K562 (cell line): ENCODE measurements at regions of chr4 and their contacts with region 1.

Region 1: DNA sequence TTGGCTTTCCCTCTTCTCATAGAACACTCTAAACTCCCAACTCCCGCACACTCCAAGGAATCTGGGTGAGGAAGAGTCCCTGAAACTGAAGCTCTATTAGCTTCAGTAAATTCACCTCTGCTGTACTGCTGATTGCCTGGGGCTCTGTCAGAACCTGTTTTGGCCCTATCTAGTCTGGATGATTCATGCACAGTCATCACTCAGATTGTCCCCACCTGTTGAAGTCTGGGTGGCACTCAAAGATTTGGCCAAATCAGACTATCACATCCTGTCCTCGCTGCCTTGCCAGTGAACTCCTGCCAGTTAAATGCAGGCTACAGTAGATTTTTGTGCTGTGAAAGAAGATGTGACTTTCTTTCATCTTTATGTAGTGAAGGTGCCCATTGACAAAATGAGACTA is 63.5 kb upstream of the EMCN start:
- DNase-seq: no peak
- ATAC-seq: no peak
- H3K4me3 ChIP-seq: no peak overlapping the region
- H3K27ac ChIP-seq: no peak overlapping the region
- H3K4me1 ChIP-seq: no peaks in the 10 kb centered on the region
- H3K27me3 ChIP-seq: no peaks in the 10 kb centered on the region
- CTCF ChIP-seq: no peak
- EP300 ChIP-seq: no peak
- POLR2A ChIP-seq: no peak
- RAD21 ChIP-seq: no peak

Region 2: DNA sequence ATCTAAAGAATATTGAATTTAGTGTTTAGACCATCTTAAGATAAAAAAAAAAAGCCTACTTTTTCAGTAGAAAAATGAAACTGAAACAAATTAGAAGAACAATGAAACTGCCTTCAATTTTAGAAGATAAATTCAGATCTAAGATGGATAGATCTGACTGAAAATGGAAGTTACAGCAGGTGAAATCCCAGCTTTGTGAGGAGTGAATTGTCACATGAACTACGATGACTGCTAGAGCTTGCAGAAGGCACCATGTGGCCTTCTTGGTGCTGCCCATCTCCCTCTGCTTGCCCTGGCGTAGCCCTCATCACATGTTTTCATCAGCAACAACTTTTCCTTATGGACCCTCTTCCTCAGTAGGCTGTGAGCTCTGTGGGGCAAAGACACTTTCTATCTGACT is 12.1 kb before region 1 on chr4:
- CTCF ChIA-PET with region 1: no interaction called
- POLR2A ChIA-PET with region 1: no interaction called
- in situ Hi-C with region 1: no loop called
- intact Hi-C with region 1: loop called (anchors 1 kb)
- DNase-seq: no peak
- ATAC-seq: no peak
- H3K4me3 ChIP-seq: no peak overlapping the region
- H3K27ac ChIP-seq: no peak overlapping the region
- H3K4me1 ChIP-seq: no peaks in the 10 kb centered on the region
- H3K27me3 ChIP-seq: no peaks in the 10 kb centered on the region
- CTCF ChIP-seq: no peak
- EP300 ChIP-seq: no peak
- POLR2A ChIP-seq: no peak
- RAD21 ChIP-seq: no peak

Region 3: DNA sequence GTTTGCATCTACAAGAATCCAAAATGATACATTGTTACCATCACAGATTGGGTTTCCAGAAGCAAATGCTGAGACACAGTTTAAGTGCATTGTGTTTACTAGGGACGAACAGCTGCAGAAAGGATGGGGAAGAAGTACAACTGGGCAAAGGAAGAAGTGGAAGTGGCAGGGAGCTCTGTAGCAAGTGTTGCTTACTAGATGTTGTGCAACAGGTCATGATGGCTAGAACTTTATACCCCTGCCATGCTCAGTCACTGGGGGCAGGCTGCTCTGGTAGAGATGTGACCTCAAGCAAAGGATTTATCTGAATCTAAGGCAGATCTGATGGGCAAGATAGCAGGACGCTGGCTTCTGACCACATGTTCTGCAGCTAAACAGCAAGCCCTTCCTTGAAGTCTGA is 12.6 kb after region 1 on chr4:
- CTCF ChIA-PET with region 1: no interaction called
- POLR2A ChIA-PET with region 1: no interaction called
- in situ Hi-C with region 1: no loop called
- intact Hi-C with region 1: no loop called
- DNase-seq: no peak
- ATAC-seq: no peak
- H3K4me3 ChIP-seq: no peak overlapping the region
- H3K27ac ChIP-seq: no peak overlapping the region
- H3K4me1 ChIP-seq: no peaks in the 10 kb centered on the region
- H3K27me3 ChIP-seq: no peaks in the 10 kb centered on the region
- CTCF ChIP-seq: no peak
- EP300 ChIP-seq: no peak
- POLR2A ChIP-seq: no peak
- RAD21 ChIP-seq: no peak

Region 4: DNA sequence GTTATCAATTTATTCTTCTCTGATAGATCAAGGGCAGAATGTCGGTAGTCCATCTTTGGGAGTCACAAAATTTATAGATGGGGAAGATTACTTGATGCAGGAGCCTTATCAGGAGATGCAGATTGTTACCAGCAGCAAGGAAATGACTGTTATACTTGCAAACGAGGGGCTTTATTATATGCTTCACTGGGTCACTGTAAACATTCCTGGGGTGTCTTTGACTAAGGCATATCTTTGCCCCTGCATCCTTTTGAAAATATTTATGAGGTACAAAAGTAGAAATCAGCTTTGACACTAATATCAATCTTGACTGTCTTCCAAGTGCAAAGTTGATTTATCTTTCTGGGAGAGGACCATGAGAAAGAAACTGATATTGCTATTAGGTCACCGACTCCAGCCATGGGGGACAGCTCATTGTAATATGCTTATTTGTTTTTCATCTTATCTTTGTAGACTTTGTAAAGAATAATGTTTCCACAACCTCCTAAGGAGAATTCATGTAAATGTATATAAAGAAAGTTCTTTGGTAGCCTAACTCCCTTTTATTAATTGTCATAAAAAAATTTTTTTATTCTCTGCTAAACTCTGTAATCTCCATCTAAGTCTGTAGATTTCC is 113.8 kb after region 1 on chr4:
- CTCF ChIA-PET with region 1: no interaction called
- POLR2A ChIA-PET with region 1: no interaction called
- in situ Hi-C with region 1: no loop called
- intact Hi-C with region 1: no loop called
- DNase-seq: no peak
- ATAC-seq: no peak
- H3K4me3 ChIP-seq: no peak overlapping the region
- H3K27ac ChIP-seq: no peak overlapping the region
- H3K4me1 ChIP-seq: no peaks in the 10 kb centered on the region
- H3K27me3 ChIP-seq: no peaks in the 10 kb centered on the region
- CTCF ChIP-seq: no peak
- EP300 ChIP-seq: no peak
- POLR2A ChIP-seq: no peak
- RAD21 ChIP-seq: no peak